Cardiac septum (tissue), 1 donor: ENCODE measurements at regions of chr4 and their contacts with region 1.

Region 1: DNA sequence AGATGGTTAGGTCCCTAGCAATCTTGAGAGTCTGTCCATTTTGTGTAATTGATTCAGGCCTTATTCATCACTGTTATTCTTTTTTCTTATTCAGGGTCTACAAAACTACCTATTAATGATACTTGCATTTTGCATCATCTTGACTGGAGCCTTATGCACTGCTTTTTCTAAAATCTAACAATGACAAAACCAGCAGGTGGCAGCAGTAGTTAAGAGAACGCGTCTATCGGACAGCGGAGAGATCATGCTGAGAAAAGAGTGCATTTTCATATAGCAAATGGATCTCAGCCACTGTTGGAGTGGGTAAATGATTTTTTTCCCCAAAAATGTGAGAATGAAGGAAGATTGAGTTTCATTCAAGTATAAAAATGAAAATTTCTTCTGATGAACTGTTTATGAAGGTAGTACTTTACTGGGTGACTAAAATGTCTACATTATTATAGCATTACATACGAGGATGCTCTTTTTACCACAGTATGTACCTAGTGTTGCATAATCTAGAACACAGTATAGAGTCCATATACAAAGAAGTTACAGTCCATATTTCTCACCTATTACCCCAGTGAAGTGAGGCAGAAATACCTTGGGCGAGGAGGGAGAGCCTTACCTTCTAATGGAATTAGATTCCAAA is 43.2 kb downstream of the TMEM144 start:
- DNase-seq: no peak

Region 2: GRCh38 chr4:157992038-157992705 is 261.3 kb before region 1 on chr4:
- intact Hi-C with region 1: loop called (anchors 5 kb)
- DNase-seq: no peak

Region 3: DNA sequence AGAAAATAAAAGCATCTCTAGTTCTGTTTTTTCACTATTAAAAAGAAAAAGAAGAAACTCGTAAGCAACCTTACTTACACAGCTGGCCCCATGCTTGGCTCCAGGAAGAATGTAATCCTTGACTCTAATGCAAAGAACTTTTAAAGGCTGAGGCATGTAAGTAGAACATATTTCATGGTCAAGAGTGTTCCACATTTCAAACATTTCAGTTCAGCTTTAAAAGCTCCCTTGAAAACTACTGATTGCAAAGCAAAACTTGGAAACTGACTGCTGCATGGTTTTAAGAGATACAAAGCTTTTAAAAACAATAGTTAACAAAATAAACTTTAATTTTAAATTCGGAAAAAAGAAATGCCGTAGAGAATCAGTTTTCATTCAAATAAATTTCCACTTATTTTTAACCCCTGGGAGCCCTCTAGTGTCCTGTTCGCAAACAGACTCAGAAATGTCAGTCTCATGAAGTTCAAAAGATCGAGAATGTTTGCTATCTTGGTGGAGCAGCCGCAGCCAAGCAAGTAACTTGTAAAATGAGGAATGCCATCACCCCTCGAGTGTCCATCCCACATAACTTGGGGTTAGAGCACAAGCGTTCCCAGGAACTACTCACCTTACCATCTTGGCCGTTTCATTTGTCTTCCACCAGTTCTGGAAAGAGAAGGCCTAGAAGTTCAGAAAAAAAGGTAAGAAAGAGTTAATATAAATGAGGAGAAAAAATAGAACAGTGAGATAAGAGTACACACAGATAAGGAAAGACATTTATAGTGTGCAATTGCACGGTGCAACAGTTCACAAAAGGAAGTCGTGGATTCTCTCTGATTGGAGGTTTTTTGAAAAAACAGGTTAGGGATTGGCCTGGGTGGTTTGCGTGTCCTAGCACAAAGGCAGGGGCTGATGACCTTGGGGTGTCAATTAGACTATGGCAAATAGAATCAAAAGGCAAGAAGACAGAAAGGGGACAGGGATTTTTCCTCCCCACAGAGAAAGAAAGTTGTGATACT is 80.9 kb before region 1 on chr4 and contains the start of gene GASK1B:
- intact Hi-C with region 1: loop called (anchors 5 kb)
- DNase-seq: no peak
- total RNA-seq, gene GASK1B: 90.6 TPM

Region 4: DNA sequence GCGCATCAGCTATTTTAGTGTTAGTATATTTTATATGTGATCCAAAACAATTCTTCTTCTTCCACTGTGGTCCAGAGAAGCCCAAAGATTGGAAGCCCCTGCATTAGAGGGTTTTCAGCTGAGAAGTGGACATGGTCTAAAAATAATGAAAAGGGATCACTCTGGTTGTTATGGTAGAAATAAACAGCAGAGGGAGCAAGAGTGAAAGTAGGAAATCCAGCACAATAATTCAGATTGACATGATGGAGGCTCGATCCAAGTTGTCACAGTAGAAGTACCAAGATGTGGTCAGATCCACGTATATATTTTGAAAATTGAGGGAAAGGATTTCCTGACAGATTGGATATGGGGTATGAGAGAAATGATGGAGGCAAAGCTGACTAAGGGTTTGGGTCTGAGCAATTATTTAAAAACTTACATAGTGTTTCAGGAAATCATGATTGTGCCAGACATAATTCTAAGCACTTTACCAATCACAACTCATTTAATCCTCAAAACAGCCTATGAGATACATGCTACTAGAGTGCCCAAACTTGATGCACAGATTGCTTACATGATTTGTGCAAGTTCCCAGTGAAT is 60.2 kb before region 1 on chr4:
- intact Hi-C with region 1: loop called (anchors 2 kb)
- DNase-seq: no peak

Region 5: GRCh38 chr4:158624889-158625478 is 371.5 kb after region 1 on chr4:
- intact Hi-C with region 1: loop called (anchors 5 kb)
- DNase-seq: no peak